HCT116 (cell line): ENCODE measurements at regions of chr12 and their contacts with region 1.

Region 1: DNA sequence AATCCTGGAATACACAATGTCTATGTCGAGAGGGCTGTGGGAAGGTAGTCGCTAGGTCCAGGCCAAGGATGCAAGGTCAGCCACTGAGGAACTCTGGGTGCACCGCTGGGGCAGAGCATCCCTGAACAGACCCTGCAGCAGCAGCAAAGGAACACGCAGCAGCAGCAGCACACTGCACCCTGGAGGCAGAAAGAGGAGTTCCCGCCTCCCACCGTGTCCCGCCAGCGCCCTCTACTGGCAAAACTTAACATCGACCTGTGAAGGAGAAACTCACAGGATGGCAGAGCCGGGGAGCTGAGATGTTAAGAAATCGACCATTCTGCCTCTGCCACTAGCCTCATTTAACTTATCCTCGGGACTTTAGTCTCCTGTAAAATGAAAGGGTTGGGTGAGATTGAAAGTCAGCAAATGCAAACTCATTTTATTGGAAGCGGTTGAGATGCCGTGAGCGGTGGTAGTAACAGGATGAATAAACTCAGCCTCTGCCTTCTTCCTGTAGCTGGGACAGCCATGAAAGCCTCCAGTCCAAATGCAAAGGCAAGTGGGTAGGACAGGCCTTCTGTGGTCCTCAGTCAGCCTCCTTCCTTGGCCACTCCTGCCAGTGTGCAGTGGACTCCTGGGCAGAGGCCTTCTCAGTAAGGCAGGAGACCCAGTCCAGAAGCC is 45.6 kb downstream of the STAB2 start:
- DNase-seq: peak; percentile 57
- ATAC-seq: peak; percentile 94
- H3K4me3 ChIP-seq: no peak overlapping the region
- H3K27ac ChIP-seq: no peak overlapping the region
- H3K4me1 ChIP-seq: peaks cover 0 to 4% of the 10 kb centered on the region in 2 experiments; a peak in 1 of 4 replicates
- H3K27me3 ChIP-seq: no peaks in the 10 kb centered on the region
- CTCF ChIP-seq: peak; percentile 100
- POLR2A ChIP-seq: no peak
- RAD21 ChIP-seq: peak; percentile 91

Region 2: DNA sequence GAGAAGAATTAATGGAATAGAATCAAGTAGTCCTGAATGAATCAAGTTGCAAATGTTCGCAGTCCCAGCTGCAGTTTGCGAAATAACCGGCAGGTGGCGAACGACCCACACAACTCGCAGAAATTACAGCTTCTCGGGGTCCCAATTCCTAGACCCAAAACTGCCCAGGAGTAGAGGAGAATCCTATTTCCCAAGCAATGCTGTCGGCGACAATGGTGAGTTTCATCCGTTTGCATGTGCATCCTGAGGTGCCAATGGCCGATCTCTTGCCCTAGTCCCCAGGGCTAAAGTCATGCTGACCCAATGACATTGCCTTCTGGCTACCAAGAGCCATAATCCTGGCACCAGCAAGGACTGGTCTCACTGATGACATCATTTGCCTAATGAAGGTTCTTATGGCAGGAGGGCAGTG is 683.7 kb before region 1 on chr12:
- CTCF ChIA-PET with region 1: interaction called, 8 read pairs
- POLR2A ChIA-PET with region 1: no interaction called
- RAD21 ChIA-PET with region 1: no interaction called
- intact Hi-C with region 1: loop called (anchors 5 kb)
- DNase-seq: peak; percentile 23
- ATAC-seq: peak; percentile 59; the same call in 1 of the 2 replicates
- H3K4me3 ChIP-seq: no peak overlapping the region
- H3K27ac ChIP-seq: no peak overlapping the region
- H3K4me1 ChIP-seq: no peaks in the 10 kb centered on the region
- H3K27me3 ChIP-seq: peaks cover 26% of the 10 kb centered on the region
- CTCF ChIP-seq: peak; percentile 63 to 95 (median 84)
- POLR2A ChIP-seq: no peak
- RAD21 ChIP-seq: peak; percentile 77

Region 3: GRCh38 chr12:103571286-103571685 is 61.4 kb before region 1 on chr12:
- CTCF ChIA-PET with region 1: interaction called, 16 read pairs
- POLR2A ChIA-PET with region 1: no interaction called
- RAD21 ChIA-PET with region 1: interaction called, 3 to 4 read pairs
- intact Hi-C with region 1: loop called (anchors 1 kb)
- DNase-seq: peak; percentile 26
- ATAC-seq: peak; percentile 73
- H3K4me3 ChIP-seq: peak overlapping the region; percentile 24 to 47
- H3K27ac ChIP-seq: no peak overlapping the region
- H3K4me1 ChIP-seq: peaks cover 4 to 15% of the 10 kb centered on the region in 2 experiments; a peak in 3 of 4 replicates
- H3K27me3 ChIP-seq: no peaks in the 10 kb centered on the region
- CTCF ChIP-seq: peak in 1 of 3 experiments; percentile 31; a peak in 2 of 6 replicates
- POLR2A ChIP-seq: no peak
- RAD21 ChIP-seq: no peak

Region 4: DNA sequence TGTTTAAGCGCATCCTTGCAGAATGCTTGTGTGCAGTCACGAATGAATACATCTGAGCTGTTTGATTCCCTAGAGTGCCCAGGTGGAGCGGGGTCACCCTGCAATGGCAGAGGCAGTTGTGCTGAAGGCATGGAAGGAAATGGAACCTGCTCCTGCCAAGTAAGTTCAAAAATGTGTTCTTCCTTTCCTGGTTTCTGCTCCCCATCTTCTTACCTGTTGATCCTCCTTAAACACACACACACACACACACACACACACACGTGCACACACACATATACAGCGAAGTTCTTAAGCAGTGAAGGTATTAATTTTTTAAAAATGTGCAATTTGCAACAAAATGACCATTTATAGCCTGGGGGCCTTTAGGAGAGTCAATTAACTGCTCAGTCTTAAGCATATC is 12.3 kb before region 1 on chr12:
- CTCF ChIA-PET with region 1: interaction called, 15 read pairs
- POLR2A ChIA-PET with region 1: no interaction called
- RAD21 ChIA-PET with region 1: no interaction called
- intact Hi-C with region 1: no loop called
- DNase-seq: no peak
- ATAC-seq: no peak
- H3K4me3 ChIP-seq: no peak overlapping the region
- H3K27ac ChIP-seq: no peak overlapping the region
- H3K4me1 ChIP-seq: no peaks in the 10 kb centered on the region
- H3K27me3 ChIP-seq: 0 out of 2 replicates have a peak, but pooled peaks cover under 1% of the 10 kb centered on the region
- CTCF ChIP-seq: no peak
- POLR2A ChIP-seq: no peak
- RAD21 ChIP-seq: no peak

Region 5: GRCh38 chr12:103698752-103699560 is 66.3 kb after region 1 on chr12:
- CTCF ChIA-PET with region 1: interaction called, 4 read pairs
- POLR2A ChIA-PET with region 1: no interaction called
- RAD21 ChIA-PET with region 1: no interaction called
- intact Hi-C with region 1: loop called (anchors 5 kb)
- DNase-seq: no peak
- ATAC-seq: no peak
- H3K4me3 ChIP-seq: no peak overlapping the region
- H3K27ac ChIP-seq: no peak overlapping the region
- H3K4me1 ChIP-seq: no peaks in the 10 kb centered on the region
- H3K27me3 ChIP-seq: peaks cover 35% of the 10 kb centered on the region
- CTCF ChIP-seq: no peak
- POLR2A ChIP-seq: no peak
- RAD21 ChIP-seq: no peak